ENCODE measurements at regions of chr20 and their contacts with region 1.

Region 1: GRCh38 chr20:34516247-34517113 is at the start of gene DYNLRB1:
- DNase-seq: peak; percentile 98
- ATAC-seq: peak; percentile 84
- H3K4me3 ChIP-seq: peak within 1 kb of the TSS; percentile 84
- H3K27ac ChIP-seq: peak within 1 kb of the TSS; percentile 73
- H3K4me1 ChIP-seq: peaks cover 16% of the 10 kb centered on the region
- H3K27me3 ChIP-seq: no peaks in the 10 kb centered on the region
- CTCF ChIP-seq: no peak
- total RNA-seq, gene DYNLRB1: 153 and 177 TPM in 2 replicates

Region 2: GRCh38 chr20:34180460-34181120 is 335.9 kb before region 1 on chr20:
- CTCF ChIA-PET with region 1: no interaction called
- POLR2A ChIA-PET with region 1: interaction called, 10 read pairs
- intact Hi-C with region 1: no loop called
- DNase-seq: peak; percentile 40
- ATAC-seq: peak; percentile 18; the same call in 1 of the 2 replicates
- H3K4me3 ChIP-seq: no peak overlapping the region
- H3K27ac ChIP-seq: no peak overlapping the region
- H3K4me1 ChIP-seq: no peaks in the 10 kb centered on the region
- H3K27me3 ChIP-seq: peaks cover 19% of the 10 kb centered on the region
- CTCF ChIP-seq: no peak

Region 3: DNA sequence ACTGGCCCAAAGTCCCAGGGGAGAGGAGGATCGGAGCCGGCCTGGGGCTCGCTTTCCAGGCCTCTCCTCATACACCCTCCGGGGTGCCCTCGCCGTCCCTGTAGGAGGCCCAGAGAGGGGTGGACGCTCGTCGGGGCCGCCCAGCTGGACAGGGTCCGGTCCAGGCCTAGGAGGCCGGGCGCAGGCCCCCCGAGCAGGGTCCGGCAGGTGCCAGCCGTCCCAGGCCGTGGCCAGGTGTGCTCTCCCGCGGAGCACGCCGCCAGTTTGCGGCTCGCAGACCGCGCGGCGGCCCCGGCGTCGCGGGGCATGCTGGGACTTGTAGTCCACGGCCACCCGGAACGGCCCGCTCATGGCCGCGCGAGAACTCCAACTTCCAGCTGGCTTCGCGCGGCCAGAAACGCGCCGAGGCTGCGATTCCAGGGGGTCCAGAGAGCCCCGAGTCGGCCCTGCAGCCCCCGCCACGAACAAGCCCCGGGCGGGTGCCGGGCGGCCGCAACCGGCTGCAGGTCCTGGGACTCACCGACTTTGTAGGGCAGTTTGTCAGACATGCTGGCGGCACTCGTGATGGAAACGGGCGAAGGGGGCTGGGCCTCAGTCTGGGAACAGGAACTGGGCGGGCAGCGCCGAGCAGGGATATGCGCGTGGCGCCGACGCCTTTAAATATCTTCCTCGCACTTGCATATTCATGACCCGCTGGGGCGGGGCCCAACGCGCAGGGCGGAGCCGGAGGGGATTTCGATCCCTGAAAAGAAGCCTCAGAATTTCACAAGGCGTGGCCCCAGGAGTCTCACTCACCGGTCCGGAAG is 213.6 kb before region 1 on chr20 and contains the start of gene AHCY:
- CTCF ChIA-PET with region 1: no interaction called
- POLR2A ChIA-PET with region 1: no interaction called
- intact Hi-C with region 1: loop called (anchors 2 kb)
- DNase-seq: peak; percentile 99
- ATAC-seq: peak; percentile 96
- H3K4me3 ChIP-seq: peak within 1 kb of the TSS; percentile 91
- H3K27ac ChIP-seq: peak within 1 kb of the TSS; percentile 81
- H3K4me1 ChIP-seq: peaks cover 26% of the 10 kb centered on the region
- H3K27me3 ChIP-seq: no peaks in the 10 kb centered on the region
- CTCF ChIP-seq: 0 out of 2 replicates have a peak, but pooled peaks have one; percentile 13
- total RNA-seq, gene AHCY: 265 and 267 TPM in 2 replicates

Region 4: GRCh38 chr20:34452281-34452982 is 64.0 kb before region 1 on chr20:
- CTCF ChIA-PET with region 1: no interaction called
- POLR2A ChIA-PET with region 1: no interaction called
- intact Hi-C with region 1: no loop called
- DNase-seq: no peak
- ATAC-seq: no peak
- H3K4me3 ChIP-seq: no peak overlapping the region
- H3K27ac ChIP-seq: no peak overlapping the region
- H3K4me1 ChIP-seq: no peaks in the 10 kb centered on the region
- H3K27me3 ChIP-seq: no peaks in the 10 kb centered on the region
- CTCF ChIP-seq: no peak

Region 5: GRCh38 chr20:34532406-34532719 is 15.9 kb after region 1 on chr20:
- CTCF ChIA-PET with region 1: no interaction called
- POLR2A ChIA-PET with region 1: no interaction called
- intact Hi-C with region 1: no loop called
- DNase-seq: no peak
- ATAC-seq: no peak
- H3K4me3 ChIP-seq: no peak overlapping the region
- H3K27ac ChIP-seq: no peak overlapping the region
- H3K4me1 ChIP-seq: no peaks in the 10 kb centered on the region
- H3K27me3 ChIP-seq: no peaks in the 10 kb centered on the region
- CTCF ChIP-seq: no peak